Dendritic cell treated with granulocyte-macrophage colony-stimulating factor and Interleukin-4, amounts not matched to agents 40 ng/mL and 50 ng/mL, for 4 days (primary cell): ENCODE measurements at regions of chr5 and their contacts with region 1.

Region 1: GRCh38 chr5:58460732-58461286 is 923 bp upstream of the PLK2 start:
- H3K4me3 Mint-ChIP-seq: peak overlapping the region; percentile 85
- H3K27ac Mint-ChIP-seq: peak overlapping the region; percentile 88
- H3K4me1 Mint-ChIP-seq: peaks cover 6% of the 10 kb centered on the region
- H3K27me3 Mint-ChIP-seq: peaks cover 12% of the 10 kb centered on the region

Region 2: DNA sequence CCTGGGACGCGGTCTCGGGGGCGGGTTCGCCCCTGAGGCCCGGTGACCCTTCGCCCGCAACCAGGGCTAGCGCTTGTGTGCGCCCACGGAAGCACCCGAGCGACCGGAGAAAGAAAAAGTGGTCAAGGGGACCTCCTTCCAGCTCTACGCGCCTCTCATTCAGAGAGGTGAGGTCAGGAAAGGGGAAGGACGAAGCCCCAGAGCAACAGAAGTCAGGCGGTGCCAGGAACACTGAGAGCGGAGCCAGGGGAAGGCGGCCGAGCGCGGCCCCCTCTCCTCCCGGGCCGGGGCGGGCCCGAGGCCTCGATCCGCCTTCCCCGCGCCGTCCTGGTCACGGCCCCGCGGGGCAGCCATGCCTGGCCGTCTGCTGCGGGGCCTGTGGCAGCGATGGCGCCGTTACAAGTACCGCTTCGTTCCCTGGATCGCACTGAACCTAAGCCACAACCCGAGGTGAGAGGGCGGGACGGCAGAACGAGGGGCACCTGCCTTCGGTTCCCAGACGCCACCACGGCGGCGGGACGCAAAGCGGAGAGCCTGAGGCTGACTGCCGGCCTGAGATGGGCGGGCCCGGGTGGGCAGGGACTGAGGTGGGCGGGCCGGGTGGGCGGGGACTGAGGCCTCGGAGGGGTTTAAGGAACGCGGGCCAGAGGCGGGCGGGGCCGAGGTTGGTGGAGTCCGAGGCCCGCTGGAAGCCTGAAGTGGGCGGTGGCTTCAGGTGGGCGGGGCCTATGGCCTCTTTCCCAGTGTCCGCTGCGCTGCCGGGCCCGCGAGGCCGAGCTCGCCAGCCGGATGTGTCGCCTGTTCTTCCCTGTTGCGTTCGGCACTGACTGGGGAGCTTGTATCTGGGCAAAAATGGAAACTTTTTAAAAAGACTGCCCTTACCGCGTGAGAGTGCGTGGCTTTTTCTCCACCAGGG is 1551.3 kb before region 1 on chr5 and contains the start of gene SETD9:
- intact Hi-C with region 1: loop called (anchors 10 kb)
- H3K4me3 Mint-ChIP-seq: peak within 1 kb of the TSS; percentile 94
- H3K27ac Mint-ChIP-seq: peak within 1 kb of the TSS; percentile 97
- H3K4me1 Mint-ChIP-seq: peaks cover 22% of the 10 kb centered on the region
- H3K27me3 Mint-ChIP-seq: no peaks in the 10 kb centered on the region

Region 3: DNA sequence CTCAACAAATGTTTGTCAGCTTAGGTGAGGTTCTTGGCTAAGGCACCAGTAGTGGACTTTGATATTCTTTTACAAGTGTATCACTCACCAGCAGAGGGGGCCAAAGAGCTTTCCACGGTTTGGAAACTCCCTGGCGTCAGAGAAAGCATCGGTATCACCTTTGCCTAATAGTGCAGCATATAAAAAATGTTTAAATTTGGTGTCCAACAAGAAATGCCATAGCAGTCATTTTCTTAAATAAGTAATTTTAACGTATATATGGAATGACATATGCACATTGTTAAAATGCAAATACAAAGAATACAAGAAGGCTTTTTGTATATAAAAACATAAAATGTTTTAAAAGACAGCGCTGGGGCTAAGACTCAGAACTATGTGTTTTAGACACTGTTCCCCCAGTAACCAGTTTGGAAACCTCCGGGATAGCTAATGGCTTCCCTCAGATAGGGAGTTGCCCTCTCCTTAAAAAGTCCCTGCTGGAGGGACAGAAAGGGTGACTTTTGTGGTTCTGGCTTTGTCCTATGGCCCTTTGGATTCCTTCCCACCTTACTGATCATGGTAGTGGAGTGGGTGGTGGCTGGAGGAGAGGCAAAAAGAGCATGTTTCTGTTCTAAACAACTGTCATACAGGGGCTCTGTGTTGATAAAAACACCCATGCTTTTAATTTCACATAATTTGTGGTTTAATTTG is 1162.4 kb before region 1 on chr5:
- intact Hi-C with region 1: loop called (anchors 1 kb)
- H3K4me3 Mint-ChIP-seq: no peak overlapping the region
- H3K27ac Mint-ChIP-seq: no peak overlapping the region
- H3K4me1 Mint-ChIP-seq: peaks cover 13% of the 10 kb centered on the region
- H3K27me3 Mint-ChIP-seq: no peaks in the 10 kb centered on the region

Region 4: DNA sequence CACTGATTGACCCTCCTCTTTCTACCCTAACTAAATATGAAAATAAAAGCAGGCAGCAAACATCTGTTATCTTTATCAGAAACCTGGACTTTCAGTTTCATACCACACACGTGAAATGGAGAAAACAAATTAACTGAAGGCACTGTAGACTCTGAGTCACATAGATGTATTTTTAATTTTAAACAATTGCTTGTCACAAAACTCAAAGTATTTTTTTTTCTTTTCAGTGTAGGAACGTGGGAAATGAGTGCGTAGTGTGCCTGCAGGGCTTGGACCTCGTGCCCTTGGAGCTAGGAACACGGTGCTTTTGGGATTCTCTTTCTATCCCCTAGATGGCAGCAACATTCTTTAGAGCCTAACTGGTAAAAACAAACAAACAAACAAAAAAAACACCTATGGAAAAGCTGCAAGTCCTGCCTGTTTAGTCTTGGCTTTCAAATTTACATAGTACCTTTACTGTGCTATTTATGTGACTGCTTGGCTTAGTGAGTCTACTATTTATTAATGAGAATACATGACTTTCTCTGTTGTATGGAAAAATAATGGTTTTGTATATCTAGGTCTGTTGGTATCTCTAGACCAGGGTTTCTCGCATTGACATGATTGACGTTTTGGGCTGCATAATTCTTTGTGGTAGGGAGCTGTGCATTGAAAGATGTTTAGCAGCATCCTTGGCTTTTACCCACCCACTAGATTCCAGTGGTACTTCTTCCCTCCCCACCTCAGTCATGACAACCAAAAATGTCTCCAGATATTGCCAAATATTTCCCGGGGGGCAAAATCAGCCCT is 961.4 kb before region 1 on chr5:
- intact Hi-C with region 1: loop called (anchors 2 kb)
- H3K4me3 Mint-ChIP-seq: peak overlapping the region; percentile 45
- H3K27ac Mint-ChIP-seq: no peak overlapping the region
- H3K4me1 Mint-ChIP-seq: peaks cover 8% of the 10 kb centered on the region
- H3K27me3 Mint-ChIP-seq: peaks cover 2% of the 10 kb centered on the region

Region 5: DNA sequence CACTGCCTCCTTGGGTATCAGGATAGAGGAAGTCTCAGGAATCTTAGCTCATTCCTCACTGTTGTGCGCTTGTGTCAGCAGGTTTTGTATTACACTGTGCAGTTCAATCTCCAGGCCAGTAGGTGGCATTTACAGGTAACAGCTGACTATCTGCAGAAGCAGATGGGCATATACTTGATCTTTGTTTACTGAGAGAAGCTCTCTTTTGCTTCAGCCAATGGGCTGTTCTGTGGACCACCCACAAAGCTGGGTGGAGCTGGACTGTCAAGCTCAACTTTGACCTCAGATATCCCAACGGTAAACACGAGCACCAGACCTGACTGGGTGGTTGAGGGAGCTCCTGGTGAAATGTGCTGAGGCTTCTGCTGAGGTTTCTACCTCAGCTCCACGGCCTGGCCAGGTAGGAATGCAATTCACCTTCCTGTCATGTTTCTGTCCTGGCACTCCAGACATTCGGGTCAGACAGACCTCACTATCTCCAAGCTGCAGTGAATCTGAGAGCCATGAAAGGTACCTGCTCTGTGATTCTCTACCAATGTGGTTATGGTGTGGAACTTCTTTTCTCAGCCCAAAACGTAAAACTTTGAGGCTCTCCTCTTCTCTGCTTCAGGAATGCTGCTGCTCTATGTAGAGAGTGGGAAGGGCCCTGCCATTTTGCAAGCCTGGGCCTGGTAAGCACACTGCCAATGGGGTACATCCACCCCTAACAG is 810.3 kb before region 1 on chr5:
- intact Hi-C with region 1: loop called (anchors 2 kb)
- H3K4me3 Mint-ChIP-seq: no peak overlapping the region
- H3K27ac Mint-ChIP-seq: no peak overlapping the region
- H3K4me1 Mint-ChIP-seq: no peaks in the 10 kb centered on the region
- H3K27me3 Mint-ChIP-seq: no peaks in the 10 kb centered on the region

Region 6: DNA sequence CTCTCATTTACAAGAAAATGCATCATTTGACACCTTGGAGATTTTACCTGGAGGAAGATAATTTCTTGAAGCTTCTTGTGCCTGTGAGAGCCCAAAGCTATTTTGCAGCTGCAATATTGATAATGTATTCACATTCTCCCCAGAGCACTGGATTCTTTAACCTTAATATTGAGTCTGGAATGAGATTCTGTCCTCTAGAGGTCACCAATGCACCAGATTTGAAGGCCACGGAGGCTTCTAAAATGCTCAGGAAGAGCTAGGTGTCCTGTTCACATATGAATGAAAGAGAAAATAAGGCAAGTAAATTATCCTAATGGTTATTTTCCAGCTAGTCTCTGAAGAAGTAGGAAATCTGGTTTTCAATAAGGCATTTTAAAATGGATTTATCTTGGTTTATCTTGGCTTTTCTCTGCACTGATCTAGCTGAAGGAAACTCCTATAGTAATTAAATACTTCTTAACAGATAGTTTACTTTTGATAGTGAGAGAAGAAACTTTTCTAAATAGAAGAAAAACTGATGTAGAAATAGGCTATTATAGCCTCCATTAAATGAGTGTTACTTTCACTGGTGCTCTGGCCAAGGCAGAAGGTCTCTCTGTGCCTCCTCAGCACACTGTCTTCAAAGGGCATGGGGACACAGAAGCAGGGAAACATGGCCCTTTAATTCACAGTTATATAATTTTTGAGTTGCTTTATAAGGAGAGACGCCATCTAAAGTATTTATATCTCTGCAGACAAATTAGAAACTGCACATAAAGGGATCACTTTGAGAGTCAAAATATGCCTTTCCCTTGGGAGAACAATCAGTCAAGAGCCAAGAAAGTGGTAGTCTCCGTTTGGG is 681.2 kb before region 1 on chr5:
- intact Hi-C with region 1: loop called (anchors 1 kb)
- H3K4me3 Mint-ChIP-seq: no peak overlapping the region
- H3K27ac Mint-ChIP-seq: no peak overlapping the region
- H3K4me1 Mint-ChIP-seq: no peaks in the 10 kb centered on the region
- H3K27me3 Mint-ChIP-seq: no peaks in the 10 kb centered on the region

Region 7: DNA sequence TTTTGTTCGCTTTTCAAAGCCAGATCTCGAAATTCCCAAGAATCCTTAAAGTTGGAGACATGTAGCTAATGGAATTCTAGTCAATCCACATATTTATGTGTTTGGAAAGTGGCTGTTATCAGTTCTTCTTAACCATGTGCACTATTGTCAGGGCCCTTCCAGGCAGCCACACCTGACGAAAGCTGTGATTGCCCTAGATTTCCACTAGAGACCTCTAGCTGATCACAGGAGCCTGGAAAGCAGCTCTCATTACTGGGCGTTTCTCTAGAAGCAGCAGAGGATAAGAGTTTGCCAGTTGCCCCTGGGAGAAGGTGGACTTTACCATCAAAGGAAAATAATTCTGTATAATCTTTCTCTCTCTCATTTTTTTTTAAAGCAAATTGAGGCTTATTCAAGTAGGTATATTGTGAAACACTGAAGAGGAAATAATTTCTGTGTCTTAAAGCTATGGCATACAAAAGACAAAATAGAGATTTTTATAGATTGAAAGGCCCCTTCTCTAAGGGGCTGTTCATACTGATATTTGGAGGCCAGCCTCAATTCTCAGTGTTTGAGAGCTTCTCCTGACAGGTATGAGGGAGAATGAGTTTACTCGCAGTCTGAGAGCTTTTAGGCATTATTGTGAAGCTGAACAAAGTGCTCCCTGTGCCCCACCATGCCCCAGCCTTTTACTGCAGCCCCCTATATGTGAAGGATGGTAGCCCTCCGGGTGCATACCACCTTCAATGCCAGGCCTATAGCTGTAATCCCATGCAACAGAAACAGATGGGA is 572.8 kb before region 1 on chr5:
- intact Hi-C with region 1: loop called (anchors 1 kb)
- H3K4me3 Mint-ChIP-seq: no peak overlapping the region
- H3K27ac Mint-ChIP-seq: no peak overlapping the region
- H3K4me1 Mint-ChIP-seq: no peaks in the 10 kb centered on the region
- H3K27me3 Mint-ChIP-seq: no peaks in the 10 kb centered on the region